ENCODE measurements at regions of chr7 and their contacts with region 1.

Region 1: DNA sequence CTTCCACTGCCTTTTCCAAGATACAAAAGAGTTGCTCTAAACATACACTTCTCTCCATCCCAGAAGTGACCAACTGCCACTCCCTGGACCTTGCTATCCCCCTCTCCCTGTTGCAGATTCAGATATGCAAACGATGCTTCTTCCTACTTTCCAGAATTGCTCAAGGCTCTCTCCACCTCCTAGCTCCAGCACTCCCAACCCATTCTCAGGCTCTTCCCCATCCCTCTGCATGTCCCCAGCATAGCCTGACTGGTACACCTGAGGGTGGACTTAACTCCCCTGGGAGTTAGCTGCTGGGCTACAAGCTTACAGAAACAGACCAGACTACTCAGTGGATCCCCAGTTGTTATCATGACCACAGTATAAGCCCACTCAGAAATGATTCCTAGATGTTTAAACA is 27.6 kb downstream of the MKRN1 start:
- DNase-seq: no peak
- ATAC-seq: peak; percentile 37 to 44; a peak in 3 of 6 replicates
- H3K4me3 ChIP-seq: no peak overlapping the region
- H3K27ac ChIP-seq: no peak overlapping the region
- H3K4me1 ChIP-seq: no peaks in the 10 kb centered on the region
- CTCF ChIP-seq: no peak
- EP300 ChIP-seq: no peak
- POLR2A ChIP-seq: no peak
- RAD21 ChIP-seq: no peak

Region 2: GRCh38 chr7:139407555-139407954 is 1044.2 kb before region 1 on chr7:
- CTCF ChIA-PET with region 1: no interaction called
- POLR2A ChIA-PET with region 1: no interaction called
- DNase-seq: no peak
- ATAC-seq: no peak
- H3K4me3 ChIP-seq: no peak overlapping the region
- H3K27ac ChIP-seq: no peak overlapping the region
- H3K4me1 ChIP-seq: no peaks in the 10 kb centered on the region
- CTCF ChIP-seq: no peak
- EP300 ChIP-seq: no peak
- POLR2A ChIP-seq: no peak
- RAD21 ChIP-seq: no peak

Region 3: DNA sequence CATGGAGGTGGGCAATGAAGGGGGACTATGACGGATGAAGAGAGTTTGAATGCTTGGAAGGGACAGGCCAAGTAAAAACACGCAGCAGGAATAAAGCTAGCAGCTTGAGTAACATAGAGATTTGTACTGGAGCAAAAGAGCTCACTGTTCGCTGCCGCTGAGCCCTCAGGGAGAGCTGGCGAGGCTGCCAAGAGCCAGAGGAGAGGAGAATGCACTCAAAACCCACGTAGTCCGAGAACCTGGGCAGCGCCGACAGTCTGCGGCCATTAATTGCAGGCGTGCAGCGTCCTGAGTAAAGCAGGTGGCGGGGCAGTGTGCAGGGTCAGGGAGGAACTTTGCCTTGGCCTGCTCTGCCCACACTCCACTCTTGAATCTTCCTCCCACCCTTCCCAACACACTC is 121.6 kb before region 1 on chr7:
- CTCF ChIA-PET with region 1: no interaction called
- POLR2A ChIA-PET with region 1: no interaction called
- DNase-seq: no peak
- ATAC-seq: no peak
- H3K4me3 ChIP-seq: no peak overlapping the region
- H3K27ac ChIP-seq: no peak overlapping the region
- H3K4me1 ChIP-seq: no peaks in the 10 kb centered on the region
- CTCF ChIP-seq: no peak
- EP300 ChIP-seq: no peak
- POLR2A ChIP-seq: no peak
- RAD21 ChIP-seq: no peak

Region 4: GRCh38 chr7:140439359-140439758 is 12.4 kb before region 1 on chr7:
- CTCF ChIA-PET with region 1: interaction called, 18 read pairs
- POLR2A ChIA-PET with region 1: no interaction called
- DNase-seq: no peak
- ATAC-seq: no peak
- H3K4me3 ChIP-seq: no peak overlapping the region
- H3K27ac ChIP-seq: no peak overlapping the region
- H3K4me1 ChIP-seq: no peaks in the 10 kb centered on the region
- CTCF ChIP-seq: no peak
- EP300 ChIP-seq: no peak
- POLR2A ChIP-seq: no peak
- RAD21 ChIP-seq: no peak

Measured in A549 (cell line).